CD4-positive, alpha-beta memory T cell (primary cell): ENCODE measurements at regions of chr20 and their contacts with region 1.

Region 1: DNA sequence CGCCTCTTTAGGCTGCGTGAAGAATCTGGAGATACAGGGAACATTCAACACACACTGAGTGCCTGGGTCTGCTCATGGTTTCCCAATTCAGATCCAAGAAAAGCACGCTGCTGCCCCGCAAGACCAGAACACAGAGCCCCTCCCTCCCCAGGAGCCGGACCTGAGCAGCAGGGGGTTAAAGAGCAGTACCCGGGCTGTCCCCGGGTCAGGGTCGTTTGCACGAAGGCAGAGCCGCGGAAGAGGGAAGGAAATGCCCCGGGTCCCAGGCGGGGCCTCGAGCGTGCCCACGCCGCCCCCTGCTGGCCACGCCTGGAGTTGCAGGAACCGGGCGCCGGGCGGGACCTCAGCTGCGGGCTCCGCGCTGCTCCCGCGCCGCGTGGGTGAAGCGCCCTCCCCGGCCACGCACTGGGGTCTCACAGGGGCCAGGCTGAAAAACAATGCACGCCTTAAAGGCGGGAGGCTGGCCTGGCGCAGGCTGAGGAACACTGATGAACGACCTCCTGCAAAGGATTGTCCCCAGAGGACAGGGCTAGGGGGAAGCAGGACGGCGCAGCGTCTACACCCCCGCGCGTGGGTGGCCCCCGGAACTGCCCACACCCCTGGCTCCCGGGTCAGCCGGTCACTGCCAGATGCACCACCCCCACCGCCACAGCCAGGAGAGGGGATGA is 48.9 kb downstream of the ANKRD60 start:
- DNase-seq: peak in 4 of 5 donors; percentile 57 to 66 (median 59)
- H3K4me3 ChIP-seq: no peak overlapping the region
- H3K4me3 Mint-ChIP-seq: peak overlapping the region; percentile 29 to 83 (median 72)
- H3K27ac ChIP-seq: no peak overlapping the region
- H3K27ac Mint-ChIP-seq: peak overlapping the region in 2 of 7 donors; percentile 22 to 36
- H3K4me1 ChIP-seq: peaks cover 10% of the 10 kb centered on the region
- H3K4me1 Mint-ChIP-seq: peaks cover 0 to 9% (median 4%) of the 10 kb centered on the region in 4 donors
- H3K27me3 ChIP-seq: peaks cover 8% of the 10 kb centered on the region
- H3K27me3 Mint-ChIP-seq: peaks cover 10 to 15% of the 10 kb centered on the region in 2 donors

Region 2: GRCh38 chr20:58169450-58169849 is 10.1 kb before region 1 on chr20:
- CTCF ChIA-PET with region 1: interaction called, 14 read pairs
- POLR2A ChIA-PET with region 1: no interaction called
- intact Hi-C with region 1: no loop called
- DNase-seq: no peak
- H3K4me3 ChIP-seq: no peak overlapping the region
- H3K4me3 Mint-ChIP-seq: no peak overlapping the region
- H3K27ac ChIP-seq: no peak overlapping the region
- H3K27ac Mint-ChIP-seq: no peak overlapping the region
- H3K4me1 ChIP-seq: no peaks in the 10 kb centered on the region
- H3K4me1 Mint-ChIP-seq: peaks cover 4 to 7% (median 6%) of the 10 kb centered on the region in 4 donors
- H3K27me3 ChIP-seq: no peaks in the 10 kb centered on the region
- H3K27me3 Mint-ChIP-seq: peaks cover 1 to 2% of the 10 kb centered on the region in 2 donors

Region 3: GRCh38 chr20:58192567-58192966 is 13.0 kb after region 1 on chr20:
- CTCF ChIA-PET with region 1: interaction called, 25 read pairs
- POLR2A ChIA-PET with region 1: no interaction called
- intact Hi-C with region 1: no loop called
- DNase-seq: peak in 1 of 5 donors; percentile 12
- H3K4me3 ChIP-seq: no peak overlapping the region
- H3K4me3 Mint-ChIP-seq: no peak overlapping the region
- H3K27ac ChIP-seq: no peak overlapping the region
- H3K27ac Mint-ChIP-seq: no peak overlapping the region
- H3K4me1 ChIP-seq: no peaks in the 10 kb centered on the region
- H3K4me1 Mint-ChIP-seq: no peaks in the 10 kb centered on the region
- H3K27me3 ChIP-seq: no peaks in the 10 kb centered on the region
- H3K27me3 Mint-ChIP-seq: peaks cover 1 to 6% of the 10 kb centered on the region in 2 donors